ENCODE measurements at regions of chr16 and their contacts with region 1.

Region 1: DNA sequence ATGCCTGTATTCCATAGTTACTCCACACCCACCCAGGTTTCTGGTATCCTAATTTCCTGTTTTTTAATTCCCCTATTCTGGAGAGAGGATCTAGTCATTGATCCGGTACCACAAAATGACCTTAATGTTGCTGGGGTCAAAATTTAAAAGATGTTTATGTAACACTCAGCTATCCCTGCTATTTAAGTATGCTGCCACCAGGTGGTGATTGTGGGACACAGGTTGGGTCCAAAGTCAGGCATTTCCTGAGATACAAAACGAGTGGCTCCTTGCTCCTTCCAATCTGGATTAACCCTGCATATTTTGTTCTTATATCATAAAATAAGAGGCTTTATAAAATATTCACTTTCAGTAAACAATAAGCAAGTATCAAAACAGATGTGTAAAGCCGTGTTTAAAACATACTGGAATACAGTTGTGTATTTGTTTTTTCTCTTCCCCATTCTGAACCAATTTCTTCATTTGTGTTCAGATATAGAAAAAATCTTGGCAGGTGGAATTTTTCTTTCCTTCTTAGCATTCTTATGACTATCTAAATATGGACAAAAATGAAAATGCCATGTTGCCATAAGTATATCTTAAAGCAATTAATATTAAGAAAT is 16.3 kb downstream of the HS3ST4 start:
- DNase-seq: peak; percentile 18
- ATAC-seq: peak; percentile 55; the same call in 1 of the 2 replicates
- H3K4me3 ChIP-seq: no peak overlapping the region
- H3K27ac ChIP-seq: no peak overlapping the region
- H3K4me1 ChIP-seq: no peaks in the 10 kb centered on the region
- H3K27me3 ChIP-seq: peaks cover 14% of the 10 kb centered on the region; the same call in 1 of the 2 replicates
- CTCF ChIP-seq: peak; percentile 32 to 74 (median 70); a peak in 5 of 6 replicates
- POLR2A ChIP-seq: no peak
- RAD21 ChIP-seq: peak; percentile 63

Region 2: DNA sequence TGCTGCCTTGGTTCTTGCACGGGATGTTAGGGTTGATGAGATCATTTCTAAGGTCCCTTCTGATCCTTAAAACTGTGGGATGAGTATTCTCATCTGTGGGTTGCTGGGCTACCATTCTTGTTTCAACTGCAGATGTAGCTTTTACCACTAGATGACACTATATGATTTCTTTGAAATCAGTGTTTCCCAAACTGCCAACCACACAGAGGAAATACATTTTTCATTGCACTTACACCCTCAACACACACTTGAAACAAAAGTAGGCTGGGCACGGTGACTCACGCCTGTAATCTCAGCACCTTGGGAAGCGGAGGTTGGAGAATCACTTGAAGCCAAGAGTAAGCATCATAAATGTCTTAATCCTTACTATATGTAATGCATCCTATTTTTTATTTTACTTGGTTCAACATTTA is 581.3 kb before region 1 on chr16:
- CTCF ChIA-PET with region 1: no interaction called
- POLR2A ChIA-PET with region 1: no interaction called
- RAD21 ChIA-PET with region 1: no interaction called
- intact Hi-C with region 1: loop called (anchors 2 kb)
- DNase-seq: no peak
- ATAC-seq: peak; percentile 87
- H3K4me3 ChIP-seq: no peak overlapping the region
- H3K27ac ChIP-seq: no peak overlapping the region
- H3K4me1 ChIP-seq: peaks cover 8 to 26% of the 10 kb centered on the region in 2 experiments
- H3K27me3 ChIP-seq: no peaks in the 10 kb centered on the region
- CTCF ChIP-seq: peak; percentile 71 to 87 (median 76)
- POLR2A ChIP-seq: no peak
- RAD21 ChIP-seq: peak; percentile 90

Region 3: DNA sequence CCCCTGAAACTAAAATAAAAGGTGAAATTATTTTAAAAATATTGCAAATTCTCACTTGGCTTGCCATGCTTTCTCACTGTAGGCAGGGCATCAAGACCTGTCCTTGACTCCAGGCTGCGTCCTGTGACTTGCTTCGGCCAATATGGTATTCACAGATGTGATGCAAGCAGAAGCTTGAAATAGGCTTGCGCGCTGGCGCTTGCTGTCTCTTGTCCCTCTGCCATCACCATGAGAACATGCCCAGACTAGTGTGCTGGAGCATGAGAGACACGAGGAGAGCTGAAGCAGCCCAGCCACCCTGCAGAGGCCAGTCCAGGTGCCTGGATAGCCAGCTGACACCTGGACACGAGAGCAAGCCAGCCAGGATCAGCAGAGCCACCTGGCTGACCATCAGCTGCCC is 428.6 kb before region 1 on chr16:
- CTCF ChIA-PET with region 1: interaction called, 3 read pairs
- POLR2A ChIA-PET with region 1: no interaction called
- RAD21 ChIA-PET with region 1: no interaction called
- intact Hi-C with region 1: loop called (anchors 1 kb)
- DNase-seq: no peak
- ATAC-seq: no peak
- H3K4me3 ChIP-seq: no peak overlapping the region
- H3K27ac ChIP-seq: no peak overlapping the region
- H3K4me1 ChIP-seq: no peaks in the 10 kb centered on the region
- H3K27me3 ChIP-seq: peaks cover 4% of the 10 kb centered on the region
- CTCF ChIP-seq: no peak
- POLR2A ChIP-seq: no peak
- RAD21 ChIP-seq: no peak